ENCODE measurements at regions of chr16 and their contacts with region 1.

Region 1: GRCh38 chr16:11016993-11017392 is 72.6 kb downstream of the CLEC16A start:
- DNase-seq: peak in 3 of 5 donors; percentile 63 to 84 (median 84)
- ATAC-seq: peak in 3 of 4 donors; percentile 59 to 87 (median 75)
- H3K4me3 ChIP-seq: no peak overlapping the region
- H3K27ac ChIP-seq: peak overlapping the region in 2 of 12 donors; percentile 34 to 41
- H3K4me1 ChIP-seq: peaks cover 0 to 14% (median 6%) of the 10 kb centered on the region in 12 donors
- H3K27me3 ChIP-seq: no peaks in the 10 kb centered on the region
- CTCF ChIP-seq: no peak
- POLR2A ChIP-seq: no peak

Region 2: GRCh38 chr16:10805334-10805733 is 211.7 kb before region 1 on chr16:
- intact Hi-C with region 1: no loop called
- DNase-seq: no peak
- ATAC-seq: no peak
- H3K4me3 ChIP-seq: no peak overlapping the region
- H3K27ac ChIP-seq: no peak overlapping the region
- H3K4me1 ChIP-seq: peaks cover 0 to 6% (median 0%) of the 10 kb centered on the region in 12 donors
- H3K27me3 ChIP-seq: no peaks in the 10 kb centered on the region
- CTCF ChIP-seq: no peak
- POLR2A ChIP-seq: no peak

Region 3: DNA sequence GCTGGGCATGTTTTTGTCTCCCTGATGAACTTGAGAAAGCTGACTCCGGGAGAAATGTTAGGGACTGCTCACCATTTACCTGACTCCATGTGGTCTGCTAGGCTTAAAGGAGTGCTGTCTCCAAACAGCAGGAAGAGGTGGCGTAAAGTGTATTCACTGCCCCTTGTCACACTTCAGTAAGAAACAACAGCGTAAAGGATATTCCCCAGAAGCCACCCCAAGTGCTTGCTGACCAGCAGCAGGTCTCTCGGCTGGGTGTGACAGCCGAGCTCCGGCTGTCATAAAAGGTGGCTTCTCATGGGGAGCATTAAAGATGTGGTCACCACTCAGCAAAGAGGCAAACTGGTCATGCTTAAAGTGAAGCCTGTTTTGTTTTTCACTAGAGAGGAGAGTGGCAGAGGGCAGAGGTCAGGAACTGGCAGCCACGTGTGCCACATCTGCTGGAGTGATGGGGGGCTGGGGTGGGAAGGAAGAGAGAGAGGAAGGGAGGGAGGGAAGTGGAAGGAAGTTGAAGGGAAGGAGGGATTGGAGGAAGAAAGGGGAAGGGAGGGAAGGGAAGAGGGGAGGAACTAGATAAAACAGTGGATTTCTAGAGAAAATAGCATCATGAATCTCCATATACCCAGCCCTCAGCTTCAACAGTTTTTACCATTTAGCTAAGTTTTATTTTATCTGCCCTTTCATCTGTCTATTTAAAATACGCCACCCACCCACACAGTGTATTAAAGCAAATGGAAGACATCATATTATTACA is 46.6 kb after region 1 on chr16:
- intact Hi-C with region 1: loop called in 1 of 10 experiments (anchors 5 kb)
- DNase-seq: no peak
- ATAC-seq: no peak
- H3K4me3 ChIP-seq: no peak overlapping the region
- H3K27ac ChIP-seq: no peak overlapping the region
- H3K4me1 ChIP-seq: no peaks in the 10 kb centered on the region
- H3K27me3 ChIP-seq: no peaks in the 10 kb centered on the region
- CTCF ChIP-seq: no peak
- POLR2A ChIP-seq: no peak

Region 4: DNA sequence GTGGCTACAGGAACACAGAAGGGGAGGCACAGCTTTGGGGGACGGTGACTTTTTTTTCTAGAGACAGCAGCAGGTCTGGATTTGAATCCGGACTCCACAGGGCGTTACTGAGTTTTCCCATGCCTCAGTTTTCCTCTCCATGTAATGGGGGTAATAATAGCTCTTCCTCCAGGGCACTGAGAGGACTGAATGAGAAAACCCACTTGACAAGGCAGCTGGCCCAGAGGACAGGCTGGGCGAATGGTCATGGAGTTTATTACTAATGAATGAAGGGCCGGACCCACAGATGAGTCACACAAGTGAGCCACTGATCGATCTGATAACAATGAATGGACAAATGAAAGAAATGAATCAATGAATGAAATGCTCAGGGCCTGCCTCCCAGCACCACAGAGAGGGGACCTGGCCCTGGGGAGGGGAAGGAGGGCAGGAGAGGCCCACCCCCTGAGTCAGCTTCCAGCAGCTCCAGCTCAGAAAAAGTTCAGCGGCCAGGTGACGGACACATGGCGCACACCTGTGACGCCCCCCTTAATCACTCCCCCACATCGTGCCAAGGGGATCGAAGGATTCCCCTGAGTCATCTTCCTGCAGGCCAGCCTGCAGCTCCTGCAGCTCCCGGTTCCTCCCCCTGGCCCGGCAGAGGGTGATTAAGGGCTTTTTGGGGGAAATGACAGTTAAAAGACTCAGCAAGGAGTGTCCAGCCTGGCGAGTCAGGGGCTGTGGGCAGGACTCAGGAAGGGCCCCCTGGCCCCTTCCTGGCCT is 184.7 kb after region 1 on chr16:
- intact Hi-C with region 1: no loop called
- DNase-seq: no peak
- ATAC-seq: no peak
- H3K4me3 ChIP-seq: no peak overlapping the region
- H3K27ac ChIP-seq: no peak overlapping the region
- H3K4me1 ChIP-seq: peaks cover 0 to 56% (median 0%) of the 10 kb centered on the region in 12 donors
- H3K27me3 ChIP-seq: no peaks in the 10 kb centered on the region
- CTCF ChIP-seq: no peak
- POLR2A ChIP-seq: no peak